Panc1 (cell line): ENCODE measurements at regions of chr1 and their contacts with region 1.

Region 1: GRCh38 chr1:204162231-204163074 is 3.7 kb downstream of the REN start:
- DNase-seq: peak; percentile 58
- ATAC-seq: peak; percentile 95
- H3K4me3 ChIP-seq: no peak overlapping the region
- H3K27ac ChIP-seq: no peak overlapping the region
- H3K4me1 ChIP-seq: no peaks in the 10 kb centered on the region; the same call in 1 of the 2 replicates
- H3K27me3 ChIP-seq: no peaks in the 10 kb centered on the region
- CTCF ChIP-seq: peak; percentile 99

Region 2: DNA sequence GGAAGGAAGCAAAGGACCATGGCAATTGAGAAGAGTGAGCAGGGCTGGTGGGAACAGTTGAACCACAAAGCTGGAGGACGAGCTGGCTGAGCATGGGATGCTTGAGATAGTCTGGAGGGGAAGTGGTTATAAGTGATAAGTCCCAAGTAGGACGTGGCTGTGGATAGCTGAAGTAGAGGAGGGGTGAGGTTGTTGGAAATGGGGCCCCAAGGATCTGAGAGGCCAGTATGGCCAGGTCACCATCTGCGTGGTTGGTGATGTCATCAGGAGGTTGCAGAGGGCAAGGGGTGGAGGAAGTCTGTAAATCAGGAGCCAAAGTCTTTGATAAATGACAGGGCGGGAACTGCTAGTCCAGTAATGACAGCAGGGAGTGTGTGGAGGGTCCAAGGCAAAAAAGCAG is 14.7 kb after region 1 on chr1:
- CTCF ChIA-PET with region 1: no interaction called
- POLR2A ChIA-PET with region 1: no interaction called
- in situ Hi-C with region 1: no loop called
- intact Hi-C with region 1: no loop called
- DNase-seq: no peak
- ATAC-seq: no peak
- H3K4me3 ChIP-seq: no peak overlapping the region
- H3K27ac ChIP-seq: no peak overlapping the region
- H3K4me1 ChIP-seq: no peaks in the 10 kb centered on the region
- H3K27me3 ChIP-seq: peaks cover 9% of the 10 kb centered on the region; the same call in 1 of the 2 replicates
- CTCF ChIP-seq: no peak

Region 3: GRCh38 chr1:204198151-204198994 is 35.9 kb after region 1 on chr1:
- CTCF ChIA-PET with region 1: interaction called, 12 read pairs
- POLR2A ChIA-PET with region 1: no interaction called
- in situ Hi-C with region 1: no loop called
- intact Hi-C with region 1: no loop called
- DNase-seq: peak; percentile 33
- ATAC-seq: peak; percentile 78
- H3K4me3 ChIP-seq: no peak overlapping the region
- H3K27ac ChIP-seq: no peak overlapping the region
- H3K4me1 ChIP-seq: no peaks in the 10 kb centered on the region
- H3K27me3 ChIP-seq: no peaks in the 10 kb centered on the region
- CTCF ChIP-seq: no peak; the same call in 1 of the 2 replicates

Region 4: DNA sequence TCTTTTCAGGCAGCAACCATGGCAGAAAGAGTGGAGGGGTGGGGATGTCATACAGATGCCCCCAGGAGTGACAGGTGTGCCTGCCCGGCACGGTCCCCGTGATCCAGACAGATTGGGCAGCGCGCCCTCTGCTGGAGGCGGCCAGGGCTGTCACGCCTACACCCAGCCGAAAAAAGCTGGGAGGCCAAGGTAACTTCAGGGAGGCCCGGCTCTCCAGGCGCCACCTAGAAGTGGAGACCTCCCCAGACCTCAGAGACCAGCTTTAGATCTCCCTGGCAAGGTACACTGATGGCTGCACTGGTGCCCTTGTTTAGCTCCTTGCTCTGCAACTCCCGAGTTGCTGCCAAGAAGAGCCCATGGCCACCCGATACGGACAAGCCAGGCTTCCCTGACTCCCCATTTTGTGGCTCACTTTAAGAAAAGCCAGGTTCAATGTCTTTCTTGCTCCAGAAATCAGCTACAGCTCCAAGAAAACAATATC is 44.7 kb after region 1 on chr1:
- CTCF ChIA-PET with region 1: interaction called, 8 read pairs
- POLR2A ChIA-PET with region 1: no interaction called
- in situ Hi-C with region 1: no loop called
- intact Hi-C with region 1: loop called (anchors 1 kb)
- DNase-seq: peak; percentile 25
- ATAC-seq: peak; percentile 97
- H3K4me3 ChIP-seq: no peak overlapping the region
- H3K27ac ChIP-seq: no peak overlapping the region
- H3K4me1 ChIP-seq: no peaks in the 10 kb centered on the region
- H3K27me3 ChIP-seq: no peaks in the 10 kb centered on the region
- CTCF ChIP-seq: peak; percentile 97

Region 5: DNA sequence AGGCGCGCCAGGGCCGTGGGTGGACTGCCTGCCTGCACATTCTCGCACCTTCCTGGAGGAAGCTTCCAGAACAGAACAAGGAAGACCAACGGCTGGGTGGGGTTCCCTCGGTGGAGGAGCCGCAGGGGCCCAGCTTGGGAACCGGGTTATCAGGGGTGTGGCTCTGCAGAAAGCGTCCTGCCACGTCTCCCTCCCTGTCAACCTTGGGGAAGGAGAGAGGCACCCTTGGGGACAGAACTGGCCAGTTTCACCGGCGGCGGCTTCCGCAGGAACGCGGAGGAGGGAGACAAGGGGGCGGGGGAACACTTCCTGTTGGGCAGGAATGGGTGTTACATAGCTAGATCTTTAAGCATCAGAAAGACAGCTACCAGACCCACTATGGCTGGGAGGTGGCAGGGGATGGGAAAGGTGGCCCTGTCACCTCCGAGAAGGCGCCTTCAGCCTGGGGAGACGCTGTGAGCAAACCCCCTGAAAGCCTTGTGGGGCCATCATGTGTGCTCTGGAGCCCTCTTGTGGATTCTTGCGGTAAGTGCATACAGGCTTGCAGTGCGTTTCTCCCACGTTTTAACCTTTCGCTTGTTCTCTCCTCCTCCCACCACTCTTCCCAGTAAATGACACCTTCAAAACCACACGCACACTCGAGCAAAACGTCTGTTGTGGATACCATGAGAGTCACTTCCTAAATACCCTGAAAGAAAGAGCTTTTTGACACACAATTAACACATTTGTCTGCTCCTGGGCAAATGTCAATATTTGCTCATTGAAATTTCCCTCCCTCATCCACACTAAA is 201.1 kb after region 1 on chr1:
- CTCF ChIA-PET with region 1: interaction called, 21 read pairs
- POLR2A ChIA-PET with region 1: no interaction called
- in situ Hi-C with region 1: no loop called
- intact Hi-C with region 1: loop called (anchors 1 kb)
- DNase-seq: peak; percentile 71
- ATAC-seq: peak; percentile 79
- H3K4me3 ChIP-seq: peak overlapping the region; percentile 19 to 52
- H3K27ac ChIP-seq: peak overlapping the region; percentile 51
- H3K4me1 ChIP-seq: peaks cover 5% of the 10 kb centered on the region; the same call in 1 of the 2 replicates
- H3K27me3 ChIP-seq: no peaks in the 10 kb centered on the region
- CTCF ChIP-seq: peak; percentile 96